Ascending aorta (tissue), 2 donors: ENCODE measurements at regions of chr18 and their contacts with region 1.

Region 1: DNA sequence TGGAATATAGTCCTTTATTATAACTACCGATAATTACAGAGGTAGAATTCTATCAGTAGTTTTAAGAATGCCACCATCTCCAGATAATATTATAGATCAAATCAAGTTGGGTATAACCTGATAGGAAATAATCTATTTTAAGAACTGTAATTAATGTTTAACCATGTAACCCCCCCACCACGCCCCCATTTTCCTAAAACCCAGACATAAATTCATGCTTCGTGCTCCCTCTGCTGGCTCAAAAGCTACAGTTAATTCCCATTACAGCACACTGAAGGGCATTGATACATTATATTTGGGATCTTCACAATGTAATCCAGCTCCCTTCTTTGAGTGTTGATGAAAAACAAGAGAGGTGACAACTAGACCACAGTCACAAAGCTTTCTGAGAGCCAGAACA is 228.0 kb upstream of the SMAD7 start:
- DNase-seq: no peak
- H3K4me3 ChIP-seq: no peak overlapping the region
- H3K27ac ChIP-seq: no peak overlapping the region
- H3K4me1 ChIP-seq: peaks cover 0 to 4% of the 10 kb centered on the region in 2 donors
- H3K27me3 ChIP-seq: no peaks in the 10 kb centered on the region
- CTCF ChIP-seq: peak; percentile 42 to 68 (median 63)

Region 2: DNA sequence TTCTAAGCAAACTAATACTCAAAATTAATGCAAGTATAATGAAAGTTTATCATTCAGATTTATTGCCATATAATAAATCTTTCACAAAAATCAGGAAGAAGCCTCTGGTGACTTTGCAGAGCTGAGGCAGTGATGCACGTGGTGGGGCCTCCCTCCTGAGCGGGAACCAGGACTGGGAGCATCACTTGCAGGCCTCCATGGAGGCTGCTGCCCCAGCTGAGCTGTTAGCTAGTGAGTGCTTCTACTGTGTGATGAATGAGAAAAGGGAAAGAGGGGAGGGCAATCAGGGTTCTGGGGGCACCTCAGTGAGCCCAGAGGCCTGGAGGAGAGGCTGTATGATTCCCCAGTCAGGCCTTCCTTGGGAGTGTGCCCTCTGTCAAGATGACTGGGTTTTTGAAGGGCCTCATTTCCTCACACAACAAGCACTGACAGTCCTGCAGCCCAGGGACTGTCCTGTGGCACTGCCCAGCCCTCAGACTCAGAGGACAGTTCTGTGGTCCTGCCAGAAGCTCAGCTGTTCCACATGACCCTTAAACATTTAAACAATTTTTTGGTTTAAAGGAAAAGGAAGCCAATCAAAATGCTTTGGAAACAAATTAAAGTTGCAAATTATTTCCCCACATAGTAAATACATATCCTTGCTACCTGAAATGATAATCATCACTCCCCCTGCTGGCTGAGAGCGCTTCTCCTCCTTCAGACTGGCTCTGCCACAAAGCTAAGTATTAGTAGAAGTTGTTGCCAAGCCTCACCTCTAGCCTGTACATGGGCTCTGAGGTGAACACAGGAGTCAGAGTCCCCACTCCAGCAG is 137.1 kb before region 1 on chr18:
- intact Hi-C with region 1: loop called (anchors 10 kb)
- DNase-seq: peak in 1 of 2 donors; percentile 82
- H3K4me3 ChIP-seq: no peak overlapping the region
- H3K27ac ChIP-seq: peak overlapping the region; percentile 13 to 63
- H3K4me1 ChIP-seq: no peaks in the 10 kb centered on the region
- H3K27me3 ChIP-seq: no peaks in the 10 kb centered on the region
- CTCF ChIP-seq: peak; percentile 38 to 70 (median 61)

Region 3: DNA sequence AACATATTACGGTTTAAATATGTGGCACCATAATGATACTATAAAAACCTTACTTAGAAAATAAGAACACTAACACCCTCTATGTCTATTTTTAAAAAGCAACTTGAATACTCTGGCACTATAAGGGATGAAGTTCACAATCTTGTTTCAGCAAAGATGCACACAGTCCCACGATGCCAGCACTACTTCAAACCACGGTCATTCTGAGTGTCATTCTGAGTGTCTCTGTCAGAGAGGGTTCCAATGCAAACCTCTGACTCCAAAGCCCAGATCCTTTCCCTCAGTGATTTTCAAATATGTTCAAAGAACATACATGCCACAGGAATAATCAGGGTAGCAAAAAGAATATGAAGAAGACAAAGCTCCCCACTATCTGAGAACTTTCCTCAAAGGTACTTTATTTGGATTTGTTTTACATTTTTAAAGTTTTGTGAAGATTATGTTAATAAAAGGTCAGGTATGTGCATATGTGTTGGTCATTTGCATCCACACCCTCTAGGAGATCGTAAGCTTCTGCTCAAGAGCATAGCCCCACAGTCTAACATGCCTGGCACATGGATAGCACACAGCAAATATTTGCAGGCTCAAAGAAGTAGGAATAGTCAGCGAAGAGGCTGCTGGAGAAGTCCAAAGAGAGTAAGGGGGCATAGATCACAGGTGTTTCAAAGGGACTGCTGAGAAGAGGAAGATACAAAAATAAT is 154.1 kb after region 1 on chr18:
- intact Hi-C with region 1: no loop called
- DNase-seq: no peak
- H3K4me3 ChIP-seq: no peak overlapping the region
- H3K27ac ChIP-seq: no peak overlapping the region
- H3K4me1 ChIP-seq: peaks cover 0 to 6% of the 10 kb centered on the region in 2 donors
- H3K27me3 ChIP-seq: no peaks in the 10 kb centered on the region
- CTCF ChIP-seq: no peak